Endothelial cell of umbilical vein (primary cell): ENCODE measurements at regions of chr1 and their contacts with region 1.

Region 1: GRCh38 chr1:3618881-3619671 is 5.7 kb upstream of the TPRG1L start:
- DNase-seq: peak; percentile 80
- H3K4me3 ChIP-seq: no peak overlapping the region
- H3K27ac ChIP-seq: peak overlapping the region; percentile 47
- H3K4me1 ChIP-seq: peaks cover 25% of the 10 kb centered on the region
- H3K27me3 ChIP-seq: no peaks in the 10 kb centered on the region
- CTCF ChIP-seq: peak; percentile 78
- POLR2A ChIP-seq: no peak

Region 2: DNA sequence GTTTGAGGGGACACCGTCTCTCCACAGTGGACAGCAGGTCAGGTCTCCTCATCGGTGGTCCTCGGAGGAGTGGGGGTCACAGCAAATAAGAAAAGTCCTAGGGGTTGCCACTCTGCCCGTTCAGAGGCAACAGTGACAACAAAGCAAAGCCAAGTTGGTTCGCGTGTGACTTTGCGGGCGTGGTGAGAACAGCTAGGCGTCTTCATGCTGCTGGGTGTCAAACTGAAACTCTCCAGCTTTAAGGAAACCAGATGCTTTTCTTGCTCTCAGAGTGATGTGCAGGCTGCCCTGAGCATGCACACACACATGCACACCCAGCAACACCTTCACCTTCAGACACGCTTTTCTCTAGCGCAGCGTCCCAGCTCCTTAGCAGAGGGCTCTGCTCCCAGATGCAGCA is 234.7 kb before region 1 on chr1:
- CTCF ChIA-PET with region 1: no interaction called
- POLR2A ChIA-PET with region 1: no interaction called
- dilution Hi-C with region 1: no loop called
- intact Hi-C with region 1: no loop called
- DNase-seq: no peak
- H3K4me3 ChIP-seq: no peak overlapping the region
- H3K27ac ChIP-seq: no peak overlapping the region
- H3K4me1 ChIP-seq: no peaks in the 10 kb centered on the region
- H3K27me3 ChIP-seq: no peaks in the 10 kb centered on the region
- CTCF ChIP-seq: no peak
- POLR2A ChIP-seq: no peak

Region 3: DNA sequence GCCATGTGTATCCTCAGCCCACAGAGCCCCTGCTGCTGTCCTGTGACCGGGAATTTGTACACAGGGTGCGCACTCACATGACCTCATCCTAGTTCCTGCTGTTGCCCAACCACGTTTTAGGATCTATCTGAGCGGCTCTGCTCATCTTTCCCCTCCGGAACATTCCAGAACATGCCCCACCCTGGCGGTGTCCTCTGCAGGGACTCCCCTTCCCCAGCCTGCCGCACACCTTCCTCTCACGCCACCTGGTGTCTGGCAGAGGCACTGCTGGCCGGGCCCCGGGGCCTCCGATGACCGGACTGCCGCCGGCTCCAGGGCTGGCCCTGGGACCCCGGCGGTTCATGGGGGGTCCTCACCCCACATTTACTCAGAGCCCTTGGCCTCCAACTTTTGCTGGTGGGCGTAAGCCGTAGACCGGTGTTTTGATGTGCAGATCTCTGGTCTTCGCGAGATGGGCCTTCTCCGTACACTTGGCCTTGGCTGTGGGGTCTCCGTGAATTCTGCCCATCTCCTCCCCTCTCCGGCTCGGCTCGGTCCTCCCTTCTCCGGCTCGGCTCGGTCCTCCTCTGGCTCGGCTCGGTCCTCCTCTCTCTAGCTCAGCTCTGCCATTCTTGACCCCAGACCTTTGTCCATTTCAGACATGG is 135.2 kb before region 1 on chr1:
- CTCF ChIA-PET with region 1: interaction called, 150 read pairs
- POLR2A ChIA-PET with region 1: no interaction called
- dilution Hi-C with region 1: no loop called
- intact Hi-C with region 1: no loop called
- DNase-seq: peak; percentile 25
- H3K4me3 ChIP-seq: no peak overlapping the region
- H3K27ac ChIP-seq: no peak overlapping the region
- H3K4me1 ChIP-seq: no peaks in the 10 kb centered on the region
- H3K27me3 ChIP-seq: no peaks in the 10 kb centered on the region
- CTCF ChIP-seq: peak; percentile 76 to 91
- POLR2A ChIP-seq: no peak

Region 4: GRCh38 chr1:3530926-3531818 is 87.9 kb before region 1 on chr1:
- CTCF ChIA-PET with region 1: interaction called, 13 read pairs
- POLR2A ChIA-PET with region 1: no interaction called
- dilution Hi-C with region 1: no loop called
- intact Hi-C with region 1: no loop called
- DNase-seq: peak; percentile 54
- H3K4me3 ChIP-seq: peak overlapping the region; percentile 50 to 89 (median 77)
- H3K27ac ChIP-seq: peak overlapping the region; percentile 12
- H3K4me1 ChIP-seq: peaks cover 11% of the 10 kb centered on the region
- H3K27me3 ChIP-seq: no peaks in the 10 kb centered on the region
- CTCF ChIP-seq: no peak
- POLR2A ChIP-seq: peak; percentile 85

Region 5: GRCh38 chr1:3564921-3565827 is 53.9 kb before region 1 on chr1:
- CTCF ChIA-PET with region 1: interaction called, 196 read pairs
- POLR2A ChIA-PET with region 1: interaction called, 4 read pairs
- dilution Hi-C with region 1: no loop called
- intact Hi-C with region 1: loop called (anchors 1 kb)
- DNase-seq: peak; percentile 26
- H3K4me3 ChIP-seq: no peak overlapping the region
- H3K27ac ChIP-seq: no peak overlapping the region
- H3K4me1 ChIP-seq: no peaks in the 10 kb centered on the region
- H3K27me3 ChIP-seq: no peaks in the 10 kb centered on the region
- CTCF ChIP-seq: peak; percentile 89 to 90
- POLR2A ChIP-seq: no peak

Region 6: GRCh38 chr1:3630161-3630611 is 11.1 kb after region 1 on chr1:
- CTCF ChIA-PET with region 1: interaction called, 20 read pairs
- POLR2A ChIA-PET with region 1: no interaction called
- dilution Hi-C with region 1: no loop called
- intact Hi-C with region 1: no loop called
- DNase-seq: no peak
- H3K4me3 ChIP-seq: no peak overlapping the region
- H3K27ac ChIP-seq: no peak overlapping the region
- H3K4me1 ChIP-seq: peaks cover 7% of the 10 kb centered on the region
- H3K27me3 ChIP-seq: no peaks in the 10 kb centered on the region
- CTCF ChIP-seq: no peak
- POLR2A ChIP-seq: no peak